ENCODE measurements at regions of chr20 and their contacts with region 1.

Region 1: DNA sequence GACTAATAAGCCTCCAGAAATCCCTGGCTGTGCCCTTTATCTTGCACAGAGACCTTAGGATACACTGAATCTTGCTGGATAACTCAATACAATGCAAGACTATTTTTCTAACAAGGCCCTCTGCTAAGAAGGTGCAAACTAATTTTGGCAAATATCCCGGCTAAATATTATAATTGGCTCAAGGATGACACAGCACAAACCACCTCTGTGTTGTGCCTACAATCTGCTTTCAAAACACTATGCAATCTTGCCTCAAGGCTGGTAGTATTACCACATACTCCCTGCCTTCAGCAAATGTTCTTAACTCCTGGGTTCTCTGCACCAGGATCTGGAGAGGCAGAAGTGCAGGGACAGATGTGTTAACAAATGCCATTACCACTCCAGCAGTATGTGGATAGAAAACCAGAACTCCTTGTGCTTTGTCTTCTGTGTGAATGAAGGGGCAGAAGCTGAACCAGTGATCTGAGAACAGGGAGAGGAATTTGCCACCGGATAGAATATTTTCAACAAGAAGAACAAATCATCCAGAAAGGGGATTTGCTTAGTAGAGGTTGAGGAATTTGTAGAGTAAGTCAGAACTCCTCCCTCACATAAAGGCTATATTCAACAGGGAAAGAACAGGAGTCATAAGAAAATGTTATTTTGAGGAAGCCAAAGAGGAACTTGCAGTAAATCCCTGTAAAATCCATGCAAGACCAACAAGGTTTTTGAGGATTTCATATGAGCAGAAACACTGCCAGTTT is 74.1 kb upstream of the SLC4A11 start:
- DNase-seq: no peak
- ATAC-seq: peak; percentile 58 to 80 (median 69)
- H3K4me3 ChIP-seq: no peak overlapping the region
- H3K27ac ChIP-seq: peak overlapping the region; percentile 73
- H3K4me1 ChIP-seq: peaks cover 55% of the 10 kb centered on the region
- H3K27me3 ChIP-seq: no peaks in the 10 kb centered on the region
- CTCF ChIP-seq: no peak

Region 2: GRCh38 chr20:3051385-3052019 is 261.6 kb before region 1 on chr20:
- intact Hi-C with region 1: loop called (anchors 2 to 5 kb)
- DNase-seq: no peak
- ATAC-seq: no peak
- H3K4me3 ChIP-seq: no peak overlapping the region
- H3K27ac ChIP-seq: no peak overlapping the region
- H3K4me1 ChIP-seq: peaks cover 7% of the 10 kb centered on the region
- H3K27me3 ChIP-seq: no peaks in the 10 kb centered on the region
- CTCF ChIP-seq: no peak

Region 3: GRCh38 chr20:3218307-3218988 is 94.7 kb before region 1 on chr20:
- intact Hi-C with region 1: loop called (anchors 2 to 5 kb)
- DNase-seq: peak; percentile 72 to 80
- ATAC-seq: peak; percentile 56 to 79 (median 68)
- H3K4me3 ChIP-seq: no peak overlapping the region
- H3K27ac ChIP-seq: no peak overlapping the region
- H3K4me1 ChIP-seq: peaks cover 24% of the 10 kb centered on the region
- H3K27me3 ChIP-seq: no peaks in the 10 kb centered on the region
- CTCF ChIP-seq: peak; percentile 94